GM13976 (cell line): ENCODE measurements at regions of chr14 and their contacts with region 1.

Region 1: DNA sequence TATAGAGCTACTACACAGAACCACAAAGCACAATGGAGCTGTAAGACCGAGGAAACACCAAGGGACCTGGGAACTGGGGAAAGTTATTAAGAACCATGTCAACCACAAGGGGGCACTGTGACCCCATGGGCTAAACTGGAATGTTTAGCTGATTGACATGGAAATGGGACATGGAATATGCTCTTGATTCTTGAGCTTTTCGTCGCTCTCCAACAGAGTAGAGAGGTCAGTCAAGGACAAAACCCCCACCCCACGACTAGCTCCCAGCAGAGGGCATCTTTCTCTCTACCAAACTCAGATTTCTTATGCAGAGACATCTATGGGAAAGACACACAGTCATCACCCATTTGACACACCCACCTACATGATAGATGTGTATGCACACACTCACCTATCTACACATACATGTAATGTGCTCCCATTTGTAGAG is 10.1 kb downstream of the NDRG2 start:
- DNase-seq: peak; percentile 70
- CTCF ChIP-seq: peak; percentile 73

Region 2: DNA sequence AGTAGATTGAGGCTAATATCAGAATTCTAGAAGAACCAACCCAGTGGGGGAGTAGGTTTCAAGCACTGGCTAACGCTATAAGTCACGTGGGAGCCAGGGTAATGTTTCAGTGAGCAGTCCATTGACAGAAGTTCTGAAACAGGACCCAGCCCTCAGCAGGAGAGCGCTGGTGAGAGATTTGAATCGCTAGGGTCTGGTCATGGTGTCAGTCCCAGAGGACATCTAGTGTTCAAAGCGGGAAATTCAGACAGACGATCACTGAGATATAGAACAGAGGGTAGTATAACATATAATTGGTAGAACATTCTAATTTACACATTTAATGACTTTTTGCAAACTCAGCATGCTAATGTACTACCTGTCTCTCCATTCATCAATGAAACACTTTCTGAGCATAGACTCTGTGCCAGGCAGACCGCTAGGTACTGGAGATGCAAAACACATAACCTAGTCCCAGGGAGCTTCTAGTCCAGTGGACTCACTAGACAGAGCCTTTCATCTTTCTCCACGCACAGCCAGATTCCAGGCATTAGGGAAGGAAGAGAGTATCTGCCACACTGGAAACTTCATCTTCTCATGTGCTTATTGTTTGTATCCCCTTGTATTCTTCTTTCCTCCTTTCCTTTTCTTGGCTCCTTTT is 159.0 kb before region 1 on chr14:
- in situ Hi-C with region 1: no loop called
- DNase-seq: peak; percentile 60
- CTCF ChIP-seq: peak; percentile 69

Region 3: DNA sequence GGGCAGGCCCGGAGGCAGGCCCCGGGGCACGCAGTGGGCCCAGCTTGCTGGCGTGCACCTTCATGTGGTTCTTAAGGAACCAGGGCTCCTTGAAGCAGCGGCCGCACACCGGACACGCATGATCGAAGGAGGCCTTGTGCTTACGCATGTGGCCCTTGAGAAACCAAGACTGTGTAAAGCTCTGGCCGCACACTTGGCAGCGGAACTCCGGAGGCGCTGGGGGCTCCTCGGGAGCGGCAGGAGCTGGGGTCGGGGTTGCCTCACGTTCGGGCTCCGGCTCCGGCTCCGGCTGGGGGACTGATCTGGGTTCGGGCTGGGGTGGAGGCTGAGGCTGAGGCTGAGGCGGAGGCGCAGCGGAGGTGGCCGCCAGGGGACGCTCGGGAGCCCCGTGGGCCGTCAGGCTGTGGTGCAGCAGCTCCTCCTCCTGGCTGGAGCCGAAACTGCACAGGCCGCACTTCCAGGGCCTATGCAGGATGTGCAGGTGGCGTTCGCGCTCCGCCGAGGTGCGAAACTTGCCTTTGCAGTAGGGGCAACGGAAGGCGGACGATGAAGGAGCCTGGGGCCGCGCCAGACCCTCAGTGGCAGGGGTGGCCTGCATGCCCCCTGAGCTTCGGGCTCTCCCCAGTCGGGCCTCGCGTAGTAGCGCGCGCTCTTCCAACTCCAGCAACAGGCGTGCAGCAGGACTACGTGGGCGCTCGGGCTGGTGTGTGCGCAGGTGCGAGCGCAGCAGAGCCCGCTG is 77.7 kb after region 1 on chr14:
- in situ Hi-C with region 1: loop called (anchors 10 kb)
- DNase-seq: peak; percentile 94
- CTCF ChIP-seq: peak; percentile 100

Region 4: GRCh38 chr14:21121106-21121505 is 106.3 kb after region 1 on chr14:
- in situ Hi-C with region 1: no loop called
- DNase-seq: no peak
- CTCF ChIP-seq: no peak

Region 5: GRCh38 chr14:21917699-21918436 is 903.1 kb after region 1 on chr14:
- in situ Hi-C with region 1: no loop called
- DNase-seq: peak; percentile 4
- CTCF ChIP-seq: peak; percentile 78